HAP-1 (cell line): ENCODE measurements at regions of chr11 and their contacts with region 1.

Region 1: DNA sequence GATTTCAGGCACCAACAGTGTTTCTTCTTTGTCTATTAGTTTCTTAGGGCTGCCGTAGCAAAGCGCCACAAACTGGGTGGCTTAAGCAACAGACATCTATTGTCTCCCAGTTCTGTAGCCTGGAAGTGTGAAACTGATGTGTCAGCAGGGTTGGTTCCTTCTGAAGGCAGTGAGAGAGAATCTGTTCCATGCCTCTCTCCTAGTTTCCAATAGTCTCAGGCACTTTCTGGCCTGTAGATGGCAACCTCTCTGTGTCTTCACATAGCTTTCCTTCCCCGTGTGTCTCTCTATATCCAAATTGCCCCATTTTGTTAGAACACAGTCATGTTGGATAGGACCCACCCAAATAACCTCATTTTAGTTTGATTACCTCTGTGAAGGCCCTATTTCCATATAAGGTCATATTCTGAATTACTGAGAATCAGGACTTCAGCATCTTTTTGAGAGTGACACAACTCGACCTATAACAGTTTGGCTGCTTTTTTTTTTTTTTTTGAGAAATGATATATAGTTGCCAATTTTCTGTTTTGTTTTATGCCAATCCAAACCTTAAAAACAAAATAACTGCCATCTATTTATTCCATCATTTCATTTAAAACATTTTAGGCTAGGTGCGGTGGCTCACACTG is 108.2 kb downstream of the SLC36A4 start:
- DNase-seq: peak; percentile 56 to 84
- H3K4me3 ChIP-seq: no peak overlapping the region
- H3K4me1 ChIP-seq: peaks cover 12% of the 10 kb centered on the region
- H3K27me3 ChIP-seq: no peaks in the 10 kb centered on the region

Region 2: GRCh38 chr11:93197380-93198214 is 108.0 kb after region 1 on chr11 and contains the start of gene SLC36A4:
- in situ Hi-C with region 1: loop called (anchors 25 kb)
- DNase-seq: peak; percentile 69 to 88
- H3K4me3 ChIP-seq: peak within 1 kb of the TSS; percentile 56
- H3K4me1 ChIP-seq: peaks cover 3% of the 10 kb centered on the region; the same call in 1 of the 2 replicates
- H3K27me3 ChIP-seq: peaks cover 8% of the 10 kb centered on the region